Activated B cell treated with CpG ODN at 0.5 μM for 24 hours (primary cell): ENCODE measurements at regions of chr22 and their contacts with region 1.

Region 1: GRCh38 chr22:50620593-50621355 is 7.2 kb downstream of the ARSA start:
- DNase-seq: peak; percentile 74
- ATAC-seq: peak; percentile 79
- H3K4me3 Mint-ChIP-seq: peak overlapping the region; percentile 85
- H3K27ac Mint-ChIP-seq: peak overlapping the region; percentile 94
- H3K4me1 Mint-ChIP-seq: peaks cover 32% of the 10 kb centered on the region
- H3K27me3 Mint-ChIP-seq: no peaks in the 10 kb centered on the region
- CTCF ChIP-seq: no peak

Region 2: GRCh38 chr22:50244420-50245213 is 376.2 kb before region 1 on chr22 and contains the start of gene TUBGCP6:
- CTCF ChIA-PET with region 1: interaction called, 8 read pairs
- POLR2A ChIA-PET with region 1: interaction called, 7 read pairs
- intact Hi-C with region 1: loop called (anchors 1 kb)
- DNase-seq: peak; percentile 96
- ATAC-seq: peak; percentile 76
- H3K4me3 Mint-ChIP-seq: peak within 1 kb of the TSS; percentile 100
- H3K27ac Mint-ChIP-seq: peak within 1 kb of the TSS; percentile 100
- H3K4me1 Mint-ChIP-seq: peaks cover 52% of the 10 kb centered on the region
- H3K27me3 Mint-ChIP-seq: no peaks in the 10 kb centered on the region
- CTCF ChIP-seq: no peak
- total RNA-seq, gene TUBGCP6: 87.5 and 103 TPM in 2 replicates

Region 3: GRCh38 chr22:50276143-50276542 is 344.6 kb before region 1 on chr22:
- CTCF ChIA-PET with region 1: interaction called, 8 read pairs
- POLR2A ChIA-PET with region 1: no interaction called
- intact Hi-C with region 1: loop called (anchors 1 kb)
- DNase-seq: no peak
- ATAC-seq: peak; percentile 78
- H3K4me3 Mint-ChIP-seq: no peak overlapping the region
- H3K27ac Mint-ChIP-seq: no peak overlapping the region
- H3K4me1 Mint-ChIP-seq: peaks cover 10% of the 10 kb centered on the region
- H3K27me3 Mint-ChIP-seq: no peaks in the 10 kb centered on the region
- CTCF ChIP-seq: no peak

Region 4: GRCh38 chr22:50399751-50400331 is 220.9 kb before region 1 on chr22:
- CTCF ChIA-PET with region 1: interaction called, 4 read pairs
- POLR2A ChIA-PET with region 1: no interaction called
- intact Hi-C with region 1: loop called (anchors 2 kb)
- DNase-seq: no peak
- ATAC-seq: peak; percentile 69
- H3K4me3 Mint-ChIP-seq: peak overlapping the region; percentile 35
- H3K27ac Mint-ChIP-seq: peak overlapping the region; percentile 64
- H3K4me1 Mint-ChIP-seq: peaks cover 49% of the 10 kb centered on the region
- H3K27me3 Mint-ChIP-seq: no peaks in the 10 kb centered on the region
- CTCF ChIP-seq: no peak

Region 5: GRCh38 chr22:50507991-50508884 is 112.5 kb before region 1 on chr22 and contains the start of gene NCAPH2:
- CTCF ChIA-PET with region 1: interaction called, 7 read pairs
- POLR2A ChIA-PET with region 1: interaction called, 41 read pairs
- intact Hi-C with region 1: loop called (anchors 1 kb)
- DNase-seq: peak; percentile 96
- ATAC-seq: peak; percentile 74
- H3K4me3 Mint-ChIP-seq: peak within 1 kb of the TSS; percentile 94
- H3K27ac Mint-ChIP-seq: peak within 1 kb of the TSS; percentile 94
- H3K4me1 Mint-ChIP-seq: peaks cover 20% of the 10 kb centered on the region
- H3K27me3 Mint-ChIP-seq: no peaks in the 10 kb centered on the region
- CTCF ChIP-seq: no peak
- total RNA-seq, gene NCAPH2: 63.9 and 68.2 TPM in 2 replicates

Region 6: DNA sequence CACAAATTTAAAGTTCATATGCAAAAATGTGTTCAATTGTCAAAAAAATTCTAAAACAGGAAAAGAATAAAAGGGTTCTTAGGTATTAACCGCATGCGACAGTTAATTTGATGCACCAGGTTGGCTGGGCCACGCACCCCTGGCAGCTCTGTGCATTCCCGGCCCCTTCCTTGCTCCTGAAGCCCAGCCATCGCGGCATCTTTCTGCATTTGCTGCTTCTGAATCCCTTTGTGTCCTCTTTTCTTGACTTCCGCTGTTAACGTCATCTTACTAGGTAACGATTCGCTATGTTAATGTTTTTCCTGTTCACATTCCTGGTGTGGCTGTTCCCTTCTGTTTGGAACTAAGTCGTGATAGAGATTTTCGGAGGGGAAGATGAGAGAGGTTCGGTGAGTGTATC is 83.0 kb before region 1 on chr22:
- CTCF ChIA-PET with region 1: interaction called, 14 read pairs
- POLR2A ChIA-PET with region 1: interaction called, 43 read pairs
- intact Hi-C with region 1: no loop called
- DNase-seq: no peak
- ATAC-seq: no peak
- H3K4me3 Mint-ChIP-seq: peak overlapping the region; percentile 13
- H3K27ac Mint-ChIP-seq: peak overlapping the region; percentile 91
- H3K4me1 Mint-ChIP-seq: peaks cover 82% of the 10 kb centered on the region
- H3K27me3 Mint-ChIP-seq: no peaks in the 10 kb centered on the region
- CTCF ChIP-seq: no peak

Region 7: GRCh38 chr22:50582562-50583293 is 38.0 kb before region 1 on chr22 and contains the start of gene CHKB:
- CTCF ChIA-PET with region 1: no interaction called
- POLR2A ChIA-PET with region 1: interaction called, 7 read pairs
- intact Hi-C with region 1: loop called (anchors 2 kb)
- DNase-seq: peak; percentile 96
- ATAC-seq: peak; percentile 94
- H3K4me3 Mint-ChIP-seq: peak within 1 kb of the TSS; percentile 87
- H3K27ac Mint-ChIP-seq: peak within 1 kb of the TSS; percentile 84
- H3K4me1 Mint-ChIP-seq: peaks cover 26% of the 10 kb centered on the region
- H3K27me3 Mint-ChIP-seq: no peaks in the 10 kb centered on the region
- CTCF ChIP-seq: no peak
- total RNA-seq, gene CHKB: 138 and 158 TPM in 2 replicates